ENCODE measurements at regions of chr10 and their contacts with region 1.

Region 1: DNA sequence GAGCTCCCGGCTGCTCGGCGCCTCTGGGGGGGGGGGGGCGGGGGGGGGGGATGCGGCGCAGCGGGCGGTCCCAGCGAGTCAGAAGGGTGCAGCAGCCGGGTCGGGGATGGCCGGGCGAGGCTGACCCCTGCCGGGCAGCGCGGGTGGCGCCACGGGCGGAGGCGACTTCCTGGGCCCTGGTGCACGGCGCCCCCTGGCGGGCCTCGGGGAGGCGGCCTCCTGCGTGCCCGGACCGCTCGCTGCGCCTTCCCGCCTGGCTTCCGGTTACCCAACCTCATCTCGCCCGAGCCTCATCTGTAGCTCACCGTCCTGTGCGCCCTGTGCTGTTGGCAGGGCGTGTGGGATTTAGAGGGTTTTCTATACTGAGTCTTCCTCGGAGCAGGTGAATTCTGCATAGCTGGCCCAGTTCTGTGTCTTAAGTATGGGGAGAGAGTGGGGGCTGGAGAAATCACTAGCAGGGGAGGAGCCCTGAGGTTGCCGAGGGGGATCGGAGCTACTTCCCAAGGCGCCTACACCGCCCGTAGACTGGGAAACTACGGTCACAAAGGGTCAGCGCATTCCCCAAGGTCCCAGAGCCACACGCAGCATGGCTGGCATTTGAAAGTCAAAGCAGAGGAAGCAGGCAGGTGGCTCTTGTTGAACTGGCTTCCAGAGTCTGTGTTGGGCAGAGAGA is 28.3 kb upstream of the WDFY4 start:
- DNase-seq: peak; percentile 58 to 92
- ATAC-seq: peak; percentile 79 to 91
- H3K4me3 ChIP-seq: peak overlapping the region; percentile 56
- H3K27ac ChIP-seq: peak overlapping the region; percentile 74 to 88
- H3K4me1 ChIP-seq: 0 out of 3 replicates have a peak, but pooled peaks cover 3% of the 10 kb centered on the region
- CTCF ChIP-seq: peak; percentile 99
- EP300 ChIP-seq: no peak
- POLR2A ChIP-seq: no peak
- RAD21 ChIP-seq: peak; percentile 67 to 95

Region 2: DNA sequence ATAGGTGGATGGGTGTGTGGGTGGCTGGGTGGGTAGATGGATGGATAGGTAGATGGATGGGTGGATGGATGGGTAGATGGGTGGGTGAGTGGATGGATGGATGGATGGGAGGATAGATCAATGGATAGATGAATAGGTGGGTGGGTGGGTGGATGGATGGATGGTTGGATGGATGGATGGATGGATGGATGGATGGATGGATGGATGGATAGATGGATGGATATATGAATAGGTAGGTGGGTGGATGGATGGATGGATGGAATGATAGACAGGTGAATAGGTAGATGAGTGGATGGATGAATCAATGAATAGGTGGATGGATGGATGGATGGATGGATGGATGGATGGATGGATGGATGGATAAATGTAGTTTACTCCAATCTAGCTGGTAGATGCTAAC is 434.6 kb before region 1 on chr10:
- CTCF ChIA-PET with region 1: no interaction called
- POLR2A ChIA-PET with region 1: no interaction called
- DNase-seq: no peak
- ATAC-seq: no peak
- H3K4me3 ChIP-seq: no peak overlapping the region
- H3K27ac ChIP-seq: no peak overlapping the region
- H3K4me1 ChIP-seq: no peaks in the 10 kb centered on the region
- CTCF ChIP-seq: no peak
- EP300 ChIP-seq: no peak
- POLR2A ChIP-seq: no peak
- RAD21 ChIP-seq: no peak

Region 3: DNA sequence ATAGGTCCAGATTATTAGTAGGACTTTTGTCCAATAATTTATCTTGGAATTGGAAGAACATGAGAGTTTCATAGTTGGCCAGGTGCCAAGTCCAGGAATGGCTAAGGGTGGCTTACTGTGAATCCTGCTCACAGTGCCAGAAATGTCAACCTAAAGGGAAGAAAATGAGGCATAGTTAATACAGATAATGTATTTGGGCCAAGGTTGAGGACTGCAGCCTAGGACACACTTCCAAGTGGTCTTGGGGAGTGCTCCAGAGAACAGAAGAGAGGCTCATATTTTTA is 271.7 kb before region 1 on chr10:
- CTCF ChIA-PET with region 1: interaction called, 31 read pairs
- POLR2A ChIA-PET with region 1: no interaction called
- DNase-seq: no peak
- ATAC-seq: no peak
- H3K4me3 ChIP-seq: no peak overlapping the region
- H3K27ac ChIP-seq: no peak overlapping the region
- H3K4me1 ChIP-seq: peaks cover 7% of the 10 kb centered on the region; the same call in 2 of the 3 replicates
- CTCF ChIP-seq: no peak
- EP300 ChIP-seq: no peak
- POLR2A ChIP-seq: no peak
- RAD21 ChIP-seq: no peak

Region 4: DNA sequence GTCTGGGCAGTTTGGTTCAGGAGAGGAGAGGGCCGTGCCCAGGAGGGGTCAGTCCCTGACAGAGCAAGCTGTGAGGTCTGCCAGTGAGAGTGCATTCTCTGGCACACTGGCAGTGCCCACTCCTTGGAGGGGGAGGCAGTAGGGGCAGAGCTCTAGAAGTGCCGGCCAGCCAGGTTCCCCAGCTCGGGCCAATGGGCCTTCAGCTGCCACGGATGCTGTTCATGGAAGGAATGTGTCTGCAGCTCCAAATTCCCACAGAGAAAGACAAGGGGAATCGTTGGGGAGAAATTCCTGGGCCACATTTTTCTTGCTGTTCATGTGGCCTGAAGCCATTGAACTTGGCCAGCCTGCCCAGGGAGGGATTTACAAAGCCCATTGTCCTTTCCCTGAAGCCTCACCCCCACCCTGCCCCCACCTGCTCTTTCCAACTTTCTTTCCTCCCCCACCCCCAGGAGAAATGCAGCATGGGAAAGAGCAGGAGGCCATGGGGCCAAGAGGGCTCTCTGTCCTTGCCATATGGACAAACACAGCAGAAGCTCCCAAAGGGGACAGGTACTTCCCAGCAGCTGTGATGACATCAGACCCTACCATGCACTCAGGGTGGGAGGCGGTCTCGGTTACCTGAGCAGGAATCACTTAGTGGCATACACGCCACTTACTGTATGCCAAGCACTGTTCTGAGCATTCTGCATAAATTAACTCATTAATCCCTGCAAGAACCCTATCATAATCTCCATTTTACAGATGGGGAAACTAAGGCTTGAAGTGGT is 122.2 kb before region 1 on chr10:
- CTCF ChIA-PET with region 1: interaction called, 16 read pairs
- POLR2A ChIA-PET with region 1: no interaction called
- DNase-seq: no peak
- ATAC-seq: no peak
- H3K4me3 ChIP-seq: no peak overlapping the region
- H3K27ac ChIP-seq: no peak overlapping the region
- H3K4me1 ChIP-seq: no peaks in the 10 kb centered on the region
- CTCF ChIP-seq: no peak
- EP300 ChIP-seq: no peak
- POLR2A ChIP-seq: no peak
- RAD21 ChIP-seq: no peak

Region 5: DNA sequence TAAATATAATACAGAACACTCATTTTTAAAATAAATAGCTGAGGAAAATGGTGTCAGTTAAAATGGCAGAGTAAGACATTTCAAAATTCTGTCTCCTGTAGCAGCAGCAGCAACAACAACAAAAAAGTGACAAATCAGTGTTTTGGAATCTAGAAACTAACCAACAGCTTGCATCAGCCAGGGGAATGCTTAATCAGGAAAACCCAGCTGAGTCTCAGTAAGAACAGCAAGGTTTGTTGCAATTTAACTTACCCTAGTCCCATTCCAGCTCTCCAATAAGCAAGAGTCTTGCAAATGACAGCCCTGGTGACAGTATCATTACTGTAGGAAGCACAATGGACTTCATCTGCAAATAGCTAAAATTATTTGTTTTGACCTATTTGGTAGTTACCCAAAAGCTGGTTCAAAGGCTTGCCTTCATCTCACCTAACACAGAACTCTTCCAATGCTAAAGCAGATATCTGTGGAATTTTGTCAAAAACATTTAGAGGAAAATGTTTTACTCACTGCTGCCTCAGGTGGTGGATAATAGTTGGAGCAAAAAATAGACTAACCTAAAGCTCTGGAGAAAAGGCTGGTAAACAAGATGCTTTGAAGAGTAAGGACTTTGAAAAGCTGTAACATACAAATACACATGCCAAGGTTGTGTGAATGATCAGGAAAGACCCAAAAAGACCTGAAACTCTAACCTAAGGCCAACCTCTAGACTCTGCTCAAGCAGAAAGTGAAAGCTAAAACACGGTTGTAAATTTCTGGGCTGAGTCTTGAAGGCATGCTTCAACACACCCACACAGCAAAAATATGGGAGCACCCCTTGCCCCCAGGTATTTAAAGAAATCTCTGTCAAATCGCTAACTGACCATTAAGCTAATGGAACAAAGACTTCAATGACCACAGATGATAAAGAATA is 41.6 kb before region 1 on chr10:
- CTCF ChIA-PET with region 1: interaction called, 112 read pairs
- POLR2A ChIA-PET with region 1: no interaction called
- DNase-seq: peak in 1 of 2 experiments; percentile 22
- ATAC-seq: peak; percentile 43 to 58; a peak in 4 of 6 replicates
- H3K4me3 ChIP-seq: no peak overlapping the region
- H3K27ac ChIP-seq: no peak overlapping the region
- H3K4me1 ChIP-seq: no peaks in the 10 kb centered on the region
- CTCF ChIP-seq: peak; percentile 16; the same call in 1 of the 3 replicates
- EP300 ChIP-seq: no peak
- POLR2A ChIP-seq: no peak
- RAD21 ChIP-seq: no peak

Region 6: DNA sequence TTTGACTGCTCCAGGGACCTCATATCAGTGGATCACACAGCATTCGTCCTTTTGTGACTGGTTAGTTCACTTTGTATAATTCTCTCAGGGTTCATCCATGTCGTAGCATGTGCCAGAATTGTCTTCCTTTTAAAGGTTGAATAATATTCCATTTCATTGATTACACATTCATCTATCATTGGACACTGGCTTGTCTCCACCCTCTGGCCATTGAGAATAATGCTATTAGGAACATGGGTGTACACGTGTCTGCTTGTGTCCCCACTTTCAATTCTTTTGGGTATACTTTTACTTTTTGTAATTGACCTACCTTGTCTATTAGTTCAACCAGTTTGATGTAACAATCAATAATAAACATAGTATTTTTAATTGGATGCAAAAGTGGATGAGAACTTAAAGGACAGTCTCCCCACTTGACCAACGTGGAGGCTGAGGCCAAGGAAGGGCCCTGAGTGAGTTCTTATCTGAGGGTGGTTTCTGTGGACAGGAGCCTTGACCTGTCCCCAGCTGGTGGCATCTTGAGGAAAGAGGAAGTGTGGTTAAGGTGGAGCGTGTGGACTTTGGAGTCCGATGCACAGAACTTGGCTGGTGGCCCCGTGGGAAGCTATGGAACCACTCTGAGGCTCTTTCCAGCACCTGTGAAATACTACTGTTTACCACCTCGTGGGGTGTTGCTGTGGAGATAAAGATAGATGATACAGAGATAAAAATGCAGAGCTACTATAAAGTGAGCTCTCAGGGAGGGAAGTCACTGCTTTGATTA is 44.9 kb after region 1 on chr10:
- CTCF ChIA-PET with region 1: interaction called, 19 read pairs
- POLR2A ChIA-PET with region 1: no interaction called
- DNase-seq: no peak
- ATAC-seq: no peak
- H3K4me3 ChIP-seq: no peak overlapping the region
- H3K27ac ChIP-seq: no peak overlapping the region
- H3K4me1 ChIP-seq: no peaks in the 10 kb centered on the region
- CTCF ChIP-seq: no peak
- EP300 ChIP-seq: no peak
- POLR2A ChIP-seq: no peak
- RAD21 ChIP-seq: no peak

Measured in A549 (cell line).